Head of caudate nucleus (tissue), 42 donors: ENCODE measurements at regions of chr19 and their contacts with region 1.

Region 1: GRCh38 chr19:18924684-18925213 is 5.2 kb downstream of the DDX49 start:
- DNase-seq: no peak

Region 2: GRCh38 chr19:18967358-18968146 is 42.8 kb after region 1 on chr19:
- intact Hi-C with region 1: no loop called
- DNase-seq: peak in 28 of 42 donors; percentile 12 to 71 (median 30)

Region 3: GRCh38 chr19:18985257-18985656 is 60.5 kb after region 1 on chr19:
- intact Hi-C with region 1: loop called (anchors 5 kb)
- DNase-seq: peak in 34 of 42 donors; percentile 14 to 72 (median 41)

Region 4: GRCh38 chr19:19063183-19064097 is 138.7 kb after region 1 on chr19 and contains the start of gene SLC25A42:
- intact Hi-C with region 1: no loop called
- DNase-seq: peak; percentile 98 to 100 (median 100)